ENCODE measurements at regions of chr17 and their contacts with region 1.

Region 1: GRCh38 chr17:40086150-40087044 is 14.0 kb downstream of the NR1D1 start:
- DNase-seq: peak in 1 of 2 donors; percentile 73
- ATAC-seq: peak in 5 of 8 donors; percentile 29 to 51 (median 39)
- H3K4me3 ChIP-seq: no peak overlapping the region
- H3K27ac ChIP-seq: peak overlapping the region in 4 of 10 donors; percentile 9 to 53 (median 36)
- H3K4me1 ChIP-seq: peaks cover 3 to 35% (median 15%) of the 10 kb centered on the region in 9 donors
- H3K27me3 ChIP-seq: no peaks in the 10 kb centered on the region
- CTCF ChIP-seq: peak; percentile 77 to 92 (median 86)

Region 2: GRCh38 chr17:39738931-39739884 is 347.2 kb before region 1 on chr17:
- intact Hi-C with region 1: no loop called
- DNase-seq: no peak
- ATAC-seq: peak in 1 of 8 donors; percentile 10
- H3K4me3 ChIP-seq: peak overlapping the region in 8 of 10 donors; percentile 2 to 50 (median 30)
- H3K27ac ChIP-seq: no peak overlapping the region
- H3K4me1 ChIP-seq: peaks cover 0 to 42% (median 35%) of the 10 kb centered on the region in 9 donors
- H3K27me3 ChIP-seq: peaks cover 0 to 84% (median 62%) of the 10 kb centered on the region in 7 donors
- CTCF ChIP-seq: no peak

Region 3: DNA sequence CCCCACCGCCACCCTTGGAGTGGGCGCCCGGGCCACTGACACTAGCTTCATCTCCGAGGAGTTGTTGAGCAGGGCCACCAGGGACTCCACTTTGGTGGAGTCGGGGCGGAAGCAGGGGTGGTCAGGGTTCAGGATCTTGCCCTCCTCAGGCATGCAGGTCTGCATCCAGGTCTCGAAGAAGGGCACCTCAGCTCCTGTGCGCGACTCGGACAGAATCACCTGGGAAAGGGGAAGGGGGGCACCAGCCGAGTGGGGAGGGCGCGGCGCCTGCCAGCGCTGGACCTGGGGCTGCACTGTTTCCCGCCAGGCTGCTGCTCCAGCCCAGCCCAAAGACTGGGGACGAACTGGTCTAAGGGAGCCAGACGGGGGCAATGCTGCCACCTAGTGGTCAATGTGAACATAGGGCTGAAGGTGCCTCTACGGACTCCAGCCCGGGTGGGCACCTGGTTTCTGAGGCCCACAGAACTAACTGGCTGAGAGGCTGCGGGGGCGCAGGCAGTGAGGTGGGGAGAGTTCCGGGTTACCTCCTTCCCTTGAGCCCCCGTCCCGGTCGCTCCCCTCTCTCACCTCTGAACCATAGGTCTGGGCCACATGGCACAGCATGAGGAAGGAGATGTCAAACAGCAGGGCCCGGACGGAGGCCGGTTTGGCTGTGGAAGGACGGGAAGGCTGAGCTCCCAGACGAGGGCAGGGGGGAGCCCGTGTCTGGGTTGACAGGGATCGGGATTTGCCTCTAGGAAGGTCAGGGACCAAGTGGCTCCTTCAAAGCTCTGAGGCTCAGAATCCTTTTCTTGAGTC is 59.4 kb before region 1 on chr17:
- intact Hi-C with region 1: loop called in 4 of 10 experiments (anchors 5 to 10 kb)
- DNase-seq: peak; percentile 78 to 87
- ATAC-seq: peak; percentile 87 to 94 (median 91)
- H3K4me3 ChIP-seq: no peak overlapping the region
- H3K27ac ChIP-seq: peak overlapping the region in 2 of 10 donors; percentile 18 to 31
- H3K4me1 ChIP-seq: peaks cover 8 to 38% (median 16%) of the 10 kb centered on the region in 9 donors
- H3K27me3 ChIP-seq: no peaks in the 10 kb centered on the region
- CTCF ChIP-seq: peak; percentile 91 to 97 (median 95)

Region 4: GRCh38 chr17:40038882-40039513 is 47.4 kb before region 1 on chr17:
- intact Hi-C with region 1: loop called in 4 of 10 experiments (anchors 2 to 10 kb)
- DNase-seq: peak; percentile 54 to 87
- ATAC-seq: peak; percentile 88 to 98 (median 94)
- H3K4me3 ChIP-seq: peak overlapping the region in 1 of 10 donors; percentile 12
- H3K27ac ChIP-seq: peak overlapping the region; percentile 51 to 86 (median 78)
- H3K4me1 ChIP-seq: peaks cover 0 to 30% (median 17%) of the 10 kb centered on the region in 9 donors
- H3K27me3 ChIP-seq: no peaks in the 10 kb centered on the region
- CTCF ChIP-seq: peak; percentile 65 to 85 (median 73)

Region 5: DNA sequence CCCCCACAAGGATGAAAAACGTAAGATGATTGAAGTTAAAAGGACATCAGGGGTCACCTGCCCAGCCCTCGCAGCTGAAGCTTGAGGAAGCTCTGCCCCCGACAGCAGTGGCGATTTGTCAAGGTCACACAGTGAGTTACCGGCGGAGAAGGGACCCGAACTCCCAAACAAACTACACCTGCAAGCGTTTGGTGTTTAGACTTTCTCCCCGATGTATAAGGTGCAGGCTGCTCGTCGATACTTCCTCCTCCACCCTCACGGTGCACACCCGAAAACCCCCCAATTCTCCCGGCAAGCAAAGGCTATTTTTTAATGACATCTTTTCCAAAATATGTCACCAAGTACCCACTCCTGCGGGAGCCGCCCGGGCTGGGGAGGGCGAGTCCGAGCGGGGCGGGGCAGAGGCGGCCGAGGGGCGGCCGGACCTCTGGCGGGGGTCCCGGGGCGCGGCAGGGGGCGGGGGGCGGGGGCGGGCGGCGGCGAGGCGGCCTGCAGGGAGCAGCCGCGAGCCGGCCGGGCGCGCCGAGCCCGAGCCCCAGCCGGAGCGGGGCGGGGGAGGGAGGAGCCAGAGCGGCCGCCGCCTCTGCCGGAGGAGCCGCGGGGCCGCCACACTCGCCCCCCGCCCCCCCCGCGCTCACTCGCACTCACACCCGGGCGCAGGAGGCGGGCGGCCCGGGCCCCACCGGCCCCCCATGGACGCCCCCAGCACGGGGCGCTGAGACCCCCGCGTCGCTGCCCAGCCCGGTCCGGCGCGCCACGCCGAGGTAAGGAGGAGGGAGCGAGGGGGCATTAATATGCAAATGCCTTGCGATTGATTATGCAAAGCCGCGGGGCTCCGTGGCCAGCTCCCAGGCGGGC is 23.8 kb before region 1 on chr17 and contains the start of gene THRA:
- intact Hi-C with region 1: loop called in 2 of 10 experiments (anchors 2 to 5 kb)
- DNase-seq: peak; percentile 76 to 83
- ATAC-seq: peak; percentile 54 to 92 (median 68)
- H3K4me3 ChIP-seq: peak within 1 kb of the TSS; percentile 85 to 100 (median 99)
- H3K27ac ChIP-seq: peak within 1 kb of the TSS; percentile 94 to 100 (median 98)
- H3K4me1 ChIP-seq: peaks cover 26 to 62% (median 56%) of the 10 kb centered on the region in 9 donors
- H3K27me3 ChIP-seq: no peaks in the 10 kb centered on the region
- CTCF ChIP-seq: peak in 5 of 9 donors; percentile 4 to 48 (median 20)
- total RNA-seq, gene THRA: 59.8 to 102 (median 69.7) TPM

Measured in heart right ventricle (tissue), 16 donors.